Cardiac septum (tissue), 1 donor: ENCODE measurements at regions of chr3 and their contacts with region 1.

Region 1: GRCh38 chr3:196609343-196609775 is 30.1 kb upstream of the NRROS start:
- DNase-seq: peak; percentile 94

Region 2: DNA sequence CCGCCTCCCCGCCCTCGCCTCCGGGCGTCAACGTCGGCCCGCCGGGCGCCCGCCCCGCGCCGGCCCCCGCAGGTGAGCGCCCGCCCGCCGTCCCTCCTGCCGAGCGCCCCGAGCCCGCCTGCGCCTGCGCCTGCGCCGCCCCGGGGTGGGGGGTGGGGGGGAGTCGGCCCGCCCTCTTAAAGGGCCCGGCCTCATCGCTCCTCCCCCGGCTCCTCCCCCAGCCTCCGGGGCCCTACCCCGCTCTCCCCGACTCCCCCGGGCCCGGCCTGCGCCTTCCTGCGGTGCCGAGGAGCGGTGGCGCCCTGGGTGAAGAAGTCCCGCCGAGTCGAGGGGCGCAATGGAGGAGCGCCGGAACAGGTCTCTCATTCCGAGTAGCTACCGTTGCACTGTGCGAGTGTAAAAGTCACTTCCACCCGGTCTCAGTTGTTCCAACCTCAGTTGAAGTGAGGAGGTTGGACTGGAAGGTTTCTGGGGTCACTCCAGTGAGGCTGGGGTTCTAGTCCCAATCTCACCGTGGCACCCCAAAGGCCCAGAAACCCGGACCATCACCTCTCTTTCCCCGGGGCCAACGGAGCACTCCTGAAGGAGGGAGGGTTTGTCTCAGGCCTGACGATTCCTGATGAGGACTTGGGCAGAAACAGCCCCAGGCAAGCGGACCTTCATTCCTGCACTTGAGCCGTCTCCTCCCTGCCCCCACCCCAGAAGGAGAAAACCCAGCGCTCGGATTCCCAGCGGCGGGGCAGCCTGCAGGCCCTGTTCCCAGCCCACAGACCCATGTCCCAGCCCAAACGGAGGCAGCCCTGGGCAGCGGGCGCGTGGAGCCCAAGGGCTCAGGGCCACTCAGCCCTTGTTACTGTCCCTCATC is 699.5 kb before region 1 on chr3:
- intact Hi-C with region 1: no loop called
- DNase-seq: peak; percentile 94

Region 3: DNA sequence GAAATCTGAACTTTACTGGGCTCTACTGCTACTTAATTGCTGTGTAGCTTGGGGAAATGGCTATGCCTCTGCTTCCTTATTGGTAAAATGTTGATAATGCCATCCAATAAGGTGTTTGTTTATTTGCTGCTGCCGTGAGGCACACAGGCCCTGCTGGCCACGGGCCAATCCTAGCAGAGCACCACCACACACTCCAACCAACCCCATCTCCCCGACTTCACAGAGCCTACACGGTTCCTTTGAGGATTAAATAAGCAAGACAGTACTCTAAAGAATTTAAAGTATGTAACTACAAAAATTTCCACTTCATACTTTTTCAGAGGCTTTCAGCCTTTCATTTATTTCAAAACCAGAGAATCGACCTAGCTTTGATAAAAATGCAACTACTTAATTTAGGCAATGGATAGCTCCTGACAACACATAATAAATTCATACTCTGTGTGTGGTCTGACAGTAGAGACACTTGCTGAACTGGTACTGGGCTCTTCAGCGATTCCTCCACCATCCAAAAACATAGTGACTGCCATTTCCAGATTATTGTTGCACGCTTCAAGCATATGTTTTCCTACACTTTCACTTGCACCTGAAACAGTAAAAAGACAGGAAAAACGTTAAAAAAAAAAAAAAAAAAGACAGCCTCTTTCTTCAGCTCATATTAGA is 202.4 kb before region 1 on chr3:
- intact Hi-C with region 1: no loop called
- DNase-seq: no peak

Region 4: GRCh38 chr3:196632046-196632751 is 22.8 kb after region 1 on chr3:
- intact Hi-C with region 1: loop called (anchors 2 kb)
- DNase-seq: peak; percentile 96

Region 5: GRCh38 chr3:196650740-196651311 is 41.5 kb after region 1 on chr3:
- intact Hi-C with region 1: loop called (anchors 5 kb)
- DNase-seq: no peak

Region 6: GRCh38 chr3:196684548-196685407 is 75.4 kb after region 1 on chr3:
- intact Hi-C with region 1: loop called (anchors 1 kb)
- DNase-seq: no peak

Region 7: DNA sequence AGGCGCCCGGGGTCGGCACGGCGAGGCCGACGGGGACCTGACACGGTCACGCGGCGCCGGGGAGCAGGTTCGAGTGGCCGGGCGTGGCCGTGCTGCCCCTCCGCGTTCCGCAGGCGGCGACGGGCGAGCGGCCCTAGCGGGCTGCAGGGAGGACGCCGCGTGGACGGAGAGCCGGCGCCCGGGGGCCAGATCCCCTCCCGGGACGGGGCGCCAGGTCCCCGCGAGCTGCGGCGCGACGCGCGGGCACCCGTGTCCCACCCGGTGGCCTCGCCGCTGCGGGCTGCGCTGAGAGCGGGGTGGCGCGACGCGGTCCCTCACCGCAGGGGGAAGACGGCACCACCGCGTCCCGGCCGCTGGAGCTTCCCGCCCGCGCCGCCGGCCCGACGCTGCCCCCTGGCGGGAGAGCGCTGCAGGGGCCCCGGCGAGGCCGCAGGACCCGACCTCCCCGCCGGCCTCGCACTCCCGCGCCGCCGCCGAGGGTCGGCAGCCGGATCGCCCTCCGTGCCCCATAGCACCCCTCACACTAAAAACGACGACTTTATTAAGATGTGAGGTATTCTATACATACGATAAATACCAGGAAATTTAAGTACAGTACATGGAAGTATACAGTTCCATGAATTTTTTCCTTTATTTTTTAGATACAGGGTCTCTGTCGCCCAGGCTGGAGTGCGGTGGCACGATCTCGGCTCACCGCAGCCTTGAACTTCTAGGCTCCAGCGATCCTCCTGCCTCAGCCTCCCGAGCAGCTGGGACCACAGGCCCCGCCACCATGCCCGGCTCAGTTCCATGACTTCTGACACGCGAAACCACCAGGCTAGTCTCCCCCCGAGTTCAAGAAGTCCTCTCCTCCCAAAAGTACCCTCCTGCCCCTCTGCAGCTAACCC is 360.5 kb after region 1 on chr3:
- intact Hi-C with region 1: loop called (anchors 5 kb)
- DNase-seq: peak; percentile 85